ENCODE measurements at regions of chr22 and their contacts with region 1.

Region 1: DNA sequence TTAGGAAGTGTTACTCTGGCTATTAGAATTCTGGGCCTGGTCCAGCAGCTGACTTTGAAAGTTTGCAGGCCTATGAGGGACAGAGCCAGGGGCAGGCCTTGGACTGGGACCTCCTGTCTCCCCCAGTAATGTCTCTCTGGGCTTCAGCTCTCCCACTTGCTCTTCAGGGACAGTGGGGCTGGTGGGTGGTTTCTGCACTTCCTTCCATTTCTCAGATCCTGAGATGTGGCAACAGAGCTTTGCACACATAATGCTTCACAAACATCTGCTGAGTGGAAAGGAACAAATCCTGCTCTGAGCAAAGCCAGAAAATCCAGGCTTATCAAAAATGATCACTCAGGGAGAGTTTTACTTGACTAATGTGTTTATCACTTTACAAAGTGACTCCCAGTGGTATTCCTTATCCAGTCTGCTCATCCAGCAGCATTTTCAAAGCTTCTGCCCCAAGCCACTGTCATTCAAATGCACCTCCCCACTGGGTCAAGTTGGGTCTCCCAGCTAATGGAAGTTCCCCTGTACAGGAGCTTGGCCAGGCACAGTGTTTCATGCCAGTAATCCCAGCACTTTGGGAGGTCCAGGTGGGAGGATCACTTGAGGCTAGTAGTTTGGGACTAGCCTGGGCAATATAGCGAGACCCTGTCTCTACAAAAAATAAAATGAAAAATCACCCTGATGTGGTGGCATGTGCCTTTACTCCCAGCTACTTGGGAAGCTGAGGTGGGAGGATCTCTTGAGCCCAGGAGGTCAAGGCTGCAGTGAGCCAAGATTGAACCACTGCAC is 13.5 kb upstream of the OSBP2 start:
- DNase-seq: no peak
- ATAC-seq: no peak
- H3K4me3 ChIP-seq: no peak overlapping the region
- H3K27ac ChIP-seq: no peak overlapping the region
- H3K4me1 ChIP-seq: no peaks in the 10 kb centered on the region
- H3K27me3 ChIP-seq: no peaks in the 10 kb centered on the region
- CTCF ChIP-seq: no peak

Region 2: DNA sequence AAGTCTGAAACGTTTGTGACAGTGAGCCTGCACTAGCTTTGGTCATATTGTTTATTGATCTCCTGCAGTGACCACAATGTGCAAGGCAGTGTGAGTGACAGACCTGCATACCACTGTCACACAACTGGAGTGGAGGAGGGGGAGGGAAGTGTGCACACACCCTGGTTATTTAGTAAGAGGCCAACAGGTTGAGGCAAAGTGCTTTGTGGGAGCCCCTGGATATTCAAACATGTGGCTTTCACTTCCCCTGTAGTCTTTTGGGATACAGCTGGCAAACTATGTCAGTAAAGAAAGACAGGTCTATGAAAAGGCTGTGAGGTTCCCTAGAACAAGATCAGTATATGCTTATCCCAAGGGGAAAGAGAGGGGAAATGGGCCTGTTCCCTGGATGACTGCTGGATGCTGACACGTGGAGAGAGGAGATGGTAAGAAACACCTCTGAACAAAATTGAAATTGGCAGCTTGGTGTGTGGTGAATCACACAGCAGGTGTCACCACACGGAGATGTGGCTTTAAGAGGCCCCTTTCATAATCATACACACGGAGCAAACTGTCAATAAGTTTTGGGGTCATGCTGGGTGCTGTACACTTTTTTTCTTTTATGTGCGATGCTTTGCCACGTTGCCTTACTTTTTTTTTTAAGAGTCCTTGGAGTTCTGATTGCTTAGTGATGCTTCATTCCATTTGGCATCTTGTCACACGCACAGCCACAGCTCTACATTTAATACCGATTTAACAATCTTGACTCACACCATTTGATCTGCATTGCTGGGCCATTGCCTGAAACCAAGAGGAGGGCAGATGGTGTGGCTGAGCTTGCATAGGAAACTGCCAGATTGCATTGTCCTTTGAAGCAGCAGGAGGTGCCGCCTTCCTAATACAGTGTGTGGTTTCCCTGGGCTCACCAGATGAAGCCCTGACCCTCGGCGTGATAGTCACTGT is 24.8 kb after region 1 on chr22:
- CTCF ChIA-PET with region 1: interaction called, 11 read pairs
- POLR2A ChIA-PET with region 1: no interaction called
- in situ Hi-C with region 1: no loop called
- intact Hi-C with region 1: no loop called
- DNase-seq: no peak
- ATAC-seq: peak; percentile 38; the same call in 1 of the 2 replicates
- H3K4me3 ChIP-seq: no peak overlapping the region
- H3K27ac ChIP-seq: no peak overlapping the region
- H3K4me1 ChIP-seq: peaks cover 8% of the 10 kb centered on the region; the same call in 1 of the 2 replicates
- H3K27me3 ChIP-seq: no peaks in the 10 kb centered on the region
- CTCF ChIP-seq: no peak

Region 3: DNA sequence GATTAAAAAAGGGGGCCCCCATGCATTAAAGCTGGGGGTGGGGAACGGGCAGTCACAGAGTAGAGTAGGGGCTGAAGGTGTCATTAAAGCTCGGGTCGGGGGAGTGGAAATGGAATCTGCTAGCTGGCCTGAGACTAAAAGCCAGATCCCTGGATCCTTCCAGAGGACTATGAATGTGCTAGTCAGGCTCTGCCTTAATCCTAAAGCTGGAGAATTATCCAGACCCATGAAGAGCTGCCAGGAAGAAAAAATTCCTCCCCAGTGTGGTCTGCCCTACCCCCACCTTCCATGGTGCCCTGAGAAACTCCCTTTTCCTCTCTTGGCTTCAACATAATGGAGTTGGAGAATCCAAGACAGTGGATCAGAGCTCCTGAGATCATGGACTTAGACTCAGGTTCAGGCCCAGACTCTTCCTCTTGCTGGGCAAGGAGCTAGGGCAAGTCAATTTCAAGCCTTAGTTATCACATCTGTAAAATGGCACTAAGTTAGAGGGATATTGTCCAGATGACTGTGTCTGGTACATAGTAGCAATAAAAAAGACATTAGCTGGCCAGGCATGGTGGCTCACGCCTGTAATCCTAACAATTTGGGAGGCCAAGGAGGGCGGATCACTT is 375.9 kb after region 1 on chr22:
- CTCF ChIA-PET with region 1: no interaction called
- POLR2A ChIA-PET with region 1: interaction called, 15 read pairs
- in situ Hi-C with region 1: no loop called
- intact Hi-C with region 1: no loop called
- DNase-seq: no peak
- ATAC-seq: no peak
- H3K4me3 ChIP-seq: no peak overlapping the region
- H3K27ac ChIP-seq: no peak overlapping the region
- H3K4me1 ChIP-seq: peaks cover 9% of the 10 kb centered on the region; the same call in 1 of the 2 replicates
- H3K27me3 ChIP-seq: no peaks in the 10 kb centered on the region
- CTCF ChIP-seq: no peak

Measured in Panc1 (cell line).